ENCODE measurements at regions of chr6 and their contacts with region 1.

Region 1: DNA sequence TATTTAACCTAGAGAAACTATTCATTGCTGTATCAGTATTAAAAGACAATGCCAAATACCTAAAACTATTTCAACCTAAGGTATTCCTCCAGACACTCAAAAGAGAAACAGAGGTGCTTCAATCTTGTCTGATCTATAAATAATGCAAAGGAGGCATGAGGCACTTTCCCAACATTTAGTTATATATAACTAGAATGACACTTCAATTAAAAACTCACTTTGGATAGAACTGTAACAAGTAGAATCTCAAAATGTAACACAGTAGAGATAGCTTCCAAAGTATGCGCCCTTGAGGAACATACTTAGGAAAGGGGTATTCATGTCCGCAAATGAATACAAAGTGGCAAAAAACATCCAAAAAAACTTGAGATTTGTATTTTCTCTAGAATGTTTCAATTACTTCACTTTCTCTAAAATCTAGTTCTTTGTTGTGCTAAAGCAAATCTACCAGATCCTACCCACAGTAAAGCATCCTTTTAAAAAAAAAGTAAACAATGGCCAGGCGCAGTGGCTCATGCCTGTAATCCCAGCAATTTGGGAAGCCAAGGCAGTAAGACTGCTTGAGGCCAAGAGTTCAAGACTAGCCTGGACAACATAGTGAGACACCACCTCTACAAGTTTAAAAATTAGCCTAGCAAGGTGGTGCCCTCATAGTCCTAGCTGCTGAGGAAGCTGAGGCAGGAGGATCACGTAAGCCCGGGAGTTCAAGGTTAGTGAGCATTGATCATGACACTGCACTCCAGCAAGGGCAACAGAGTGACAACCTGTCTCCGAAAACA is 10.3 kb downstream of the SYNCRIP start:
- DNase-seq: no peak

Region 2: GRCh38 chr6:85585741-85586140 is 46.6 kb before region 1 on chr6:
- intact Hi-C with region 1: no loop called
- DNase-seq: no peak

Region 3: DNA sequence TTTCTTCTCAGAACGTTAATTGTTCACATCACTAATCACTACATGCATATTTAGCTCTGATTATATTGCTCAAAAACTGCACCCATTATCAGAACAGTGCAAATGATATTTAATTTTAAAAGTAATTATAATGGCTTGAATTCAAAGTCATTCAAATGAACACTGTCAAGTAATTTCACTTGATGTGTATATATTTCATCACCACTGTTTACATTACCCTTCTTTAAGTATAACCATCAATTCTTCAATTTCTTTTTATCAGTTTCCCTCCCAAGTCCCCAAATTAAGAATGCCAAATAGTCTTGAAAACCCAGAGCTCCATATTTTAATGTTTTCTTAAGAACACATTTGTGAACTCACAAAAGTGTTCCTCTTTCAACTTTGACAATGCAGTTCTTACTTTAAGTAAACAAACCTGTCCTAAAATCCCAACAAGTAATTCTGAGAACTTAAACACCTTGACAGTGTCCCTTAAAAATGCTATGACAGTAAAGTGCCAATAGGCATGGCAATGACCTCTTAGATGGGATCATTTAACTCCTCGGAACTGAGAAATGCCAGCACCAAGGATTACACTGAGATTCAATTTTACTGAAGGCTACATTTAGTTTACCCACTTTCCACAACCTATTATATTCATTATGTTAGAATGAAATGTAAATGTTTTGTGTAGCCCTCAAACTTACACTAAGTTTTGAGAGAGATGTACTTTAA is 22.0 kb before region 1 on chr6:
- intact Hi-C with region 1: loop called in 1 of 2 experiments (anchors 1 kb)
- DNase-seq: no peak